ENCODE measurements at regions of chr1 and their contacts with region 1.

Region 1: GRCh38 chr1:111471012-111471411 is 2.8 kb upstream of the C1orf162 start:
- DNase-seq: peak; percentile 88
- H3K4me3 Mint-ChIP-seq: no peak overlapping the region
- H3K27ac Mint-ChIP-seq: no peak overlapping the region
- H3K4me1 Mint-ChIP-seq: peaks cover 24% of the 10 kb centered on the region
- H3K27me3 Mint-ChIP-seq: no peaks in the 10 kb centered on the region

Region 2: GRCh38 chr1:111406321-111406768 is 64.7 kb before region 1 on chr1:
- CTCF ChIA-PET with region 1: no interaction called
- intact Hi-C with region 1: loop called (anchors 2 kb)
- DNase-seq: peak; percentile 70
- H3K4me3 Mint-ChIP-seq: no peak overlapping the region
- H3K27ac Mint-ChIP-seq: no peak overlapping the region
- H3K4me1 Mint-ChIP-seq: peaks cover 28% of the 10 kb centered on the region
- H3K27me3 Mint-ChIP-seq: no peaks in the 10 kb centered on the region

Region 3: DNA sequence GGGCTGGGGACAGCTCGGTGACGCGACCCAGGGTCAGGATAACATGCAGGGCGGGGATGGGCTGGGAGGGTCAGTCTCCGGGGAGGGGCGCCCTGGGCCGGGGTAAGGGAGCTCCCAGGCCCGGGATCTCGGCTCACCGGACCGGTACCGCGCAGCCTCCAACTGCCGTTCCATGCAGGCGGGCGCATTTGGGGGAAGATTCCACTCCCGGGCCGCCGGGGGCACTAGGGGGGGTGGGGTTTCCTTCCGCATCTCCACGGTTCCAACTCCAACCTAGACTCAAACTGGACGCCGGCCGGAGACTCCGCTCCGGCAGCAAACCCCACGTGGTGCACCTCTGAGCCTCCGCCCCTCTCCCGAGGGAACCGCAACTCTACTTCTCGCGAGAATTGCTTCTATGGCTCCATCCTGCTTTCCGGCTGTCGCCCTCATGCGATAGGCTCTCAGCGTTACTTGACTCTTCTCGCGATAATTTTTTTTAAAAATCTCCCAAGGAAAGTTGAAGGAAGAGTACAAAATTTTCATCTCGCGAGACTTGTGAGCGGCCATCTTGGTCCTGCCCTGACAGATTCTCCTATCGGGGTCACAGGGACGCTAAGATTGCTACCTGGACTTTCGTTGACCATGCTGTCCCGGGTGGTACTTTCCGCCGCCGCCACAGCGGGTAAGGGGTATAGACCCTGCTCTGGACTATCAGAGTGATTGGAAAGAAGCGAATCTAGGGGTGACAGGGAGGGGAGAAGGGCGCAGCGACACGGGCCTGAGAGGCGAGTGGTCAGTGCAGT is 21.9 kb before region 1 on chr1 and contains the starts of genes ATP5PB and WDR77:
- CTCF ChIA-PET with region 1: interaction called, 8 read pairs
- intact Hi-C with region 1: loop called (anchors 1 kb)
- DNase-seq: peak; percentile 96
- H3K4me3 Mint-ChIP-seq: peak within 1 kb of the TSS; percentile 100
- H3K27ac Mint-ChIP-seq: peak within 1 kb of the TSS; percentile 96
- H3K4me1 Mint-ChIP-seq: peaks cover 71% of the 10 kb centered on the region
- H3K27me3 Mint-ChIP-seq: no peaks in the 10 kb centered on the region
- total RNA-seq, gene ATP5PB: 324 to 331 TPM
- total RNA-seq, gene WDR77: 43.1 to 48.8 TPM

Region 4: DNA sequence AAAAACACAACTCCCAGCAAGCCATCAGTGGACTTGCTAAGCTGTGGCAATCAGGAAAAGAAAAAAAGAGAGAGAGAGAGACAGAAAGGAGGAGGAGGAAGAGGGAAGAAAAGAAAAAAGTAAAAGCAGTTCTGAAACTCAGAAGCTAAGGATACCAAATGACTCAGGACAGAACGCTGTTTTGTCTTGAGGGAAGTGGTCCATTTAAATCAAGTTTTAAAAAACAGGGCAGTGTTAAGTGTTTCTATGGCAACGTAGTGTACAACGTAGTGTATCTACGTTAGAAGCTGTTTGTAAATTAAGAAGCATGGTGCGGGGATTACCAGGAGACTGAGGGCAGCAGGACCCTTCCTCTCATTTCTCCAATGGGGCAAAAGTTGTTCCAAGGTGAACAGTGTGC is 26.6 kb after region 1 on chr1:
- CTCF ChIA-PET with region 1: interaction called, 8 read pairs
- intact Hi-C with region 1: loop called (anchors 1 kb)
- DNase-seq: no peak
- H3K4me3 Mint-ChIP-seq: no peak overlapping the region
- H3K27ac Mint-ChIP-seq: peak overlapping the region; percentile 6
- H3K4me1 Mint-ChIP-seq: peaks cover 27% of the 10 kb centered on the region
- H3K27me3 Mint-ChIP-seq: no peaks in the 10 kb centered on the region

Region 5: GRCh38 chr1:111725192-111725591 is 254.2 kb after region 1 on chr1:
- CTCF ChIA-PET with region 1: no interaction called
- intact Hi-C with region 1: no loop called
- DNase-seq: no peak
- H3K4me3 Mint-ChIP-seq: no peak overlapping the region
- H3K27ac Mint-ChIP-seq: no peak overlapping the region
- H3K4me1 Mint-ChIP-seq: peaks cover 9% of the 10 kb centered on the region
- H3K27me3 Mint-ChIP-seq: no peaks in the 10 kb centered on the region